ENCODE measurements at regions of chr9 and their contacts with region 1.

Region 1: GRCh38 chr9:127122176-127123063 is at the start of gene ANGPTL2:
- DNase-seq: peak in 1 of 2 donors; percentile 98
- H3K4me3 ChIP-seq: peak within 1 kb of the TSS; percentile 52 to 72
- H3K27ac ChIP-seq: peak within 1 kb of the TSS; percentile 90
- H3K4me1 ChIP-seq: peaks cover 69% of the 10 kb centered on the region
- H3K27me3 ChIP-seq: no peaks in the 10 kb centered on the region
- CTCF ChIP-seq: no peak
- POLR2A ChIP-seq: peak in 1 of 2 donors; percentile 88
- total RNA-seq, gene ANGPTL2: 65.8 TPM

Region 2: DNA sequence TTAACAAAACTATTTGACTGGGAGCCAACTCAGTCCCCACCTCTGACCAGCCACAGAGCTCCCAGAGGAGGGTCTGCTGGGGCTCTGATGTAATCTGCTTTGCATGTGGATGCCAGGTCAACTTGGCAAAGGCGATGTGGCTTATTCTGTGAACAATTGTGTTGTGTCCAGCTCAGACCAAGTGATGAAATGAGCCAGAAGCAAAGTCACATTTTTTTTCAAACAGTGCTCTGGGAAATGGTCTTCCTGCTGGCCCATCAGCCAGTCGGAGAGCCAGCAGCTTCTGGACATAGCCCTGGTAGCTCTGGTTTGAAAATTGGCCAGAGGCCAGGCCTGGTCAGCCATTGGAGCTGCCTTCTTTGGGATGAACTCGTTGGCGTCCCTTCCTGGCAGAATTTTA is 86.5 kb before region 1 on chr9:
- intact Hi-C with region 1: loop called (anchors 10 kb)
- DNase-seq: no peak
- H3K4me3 ChIP-seq: no peak overlapping the region
- H3K27ac ChIP-seq: peak overlapping the region; percentile 77
- H3K4me1 ChIP-seq: peaks cover 25% of the 10 kb centered on the region
- H3K27me3 ChIP-seq: no peaks in the 10 kb centered on the region
- CTCF ChIP-seq: no peak
- POLR2A ChIP-seq: no peak

Region 3: GRCh38 chr9:127049044-127049443 is 73.4 kb before region 1 on chr9:
- intact Hi-C with region 1: no loop called
- DNase-seq: peak; percentile 64 to 91
- H3K4me3 ChIP-seq: peak overlapping the region in 1 of 2 donors; percentile 14
- H3K27ac ChIP-seq: peak overlapping the region; percentile 26
- H3K4me1 ChIP-seq: peaks cover 22% of the 10 kb centered on the region
- H3K27me3 ChIP-seq: no peaks in the 10 kb centered on the region
- CTCF ChIP-seq: peak in 2 of 3 experiments; percentile 18 to 47
- POLR2A ChIP-seq: no peak

Region 4: GRCh38 chr9:127187231-127187956 is 65.0 kb after region 1 on chr9:
- intact Hi-C with region 1: loop called (anchors 2 kb)
- DNase-seq: no peak
- H3K4me3 ChIP-seq: no peak overlapping the region
- H3K27ac ChIP-seq: peak overlapping the region; percentile 90
- H3K4me1 ChIP-seq: peaks cover 50% of the 10 kb centered on the region
- H3K27me3 ChIP-seq: no peaks in the 10 kb centered on the region
- CTCF ChIP-seq: peak in 1 of 3 experiments; percentile 6
- POLR2A ChIP-seq: no peak

Measured in vagina (tissue), 2 donors.